HepG2 (cell line): ENCODE measurements at regions of chr20 and their contacts with region 1.

Region 1: DNA sequence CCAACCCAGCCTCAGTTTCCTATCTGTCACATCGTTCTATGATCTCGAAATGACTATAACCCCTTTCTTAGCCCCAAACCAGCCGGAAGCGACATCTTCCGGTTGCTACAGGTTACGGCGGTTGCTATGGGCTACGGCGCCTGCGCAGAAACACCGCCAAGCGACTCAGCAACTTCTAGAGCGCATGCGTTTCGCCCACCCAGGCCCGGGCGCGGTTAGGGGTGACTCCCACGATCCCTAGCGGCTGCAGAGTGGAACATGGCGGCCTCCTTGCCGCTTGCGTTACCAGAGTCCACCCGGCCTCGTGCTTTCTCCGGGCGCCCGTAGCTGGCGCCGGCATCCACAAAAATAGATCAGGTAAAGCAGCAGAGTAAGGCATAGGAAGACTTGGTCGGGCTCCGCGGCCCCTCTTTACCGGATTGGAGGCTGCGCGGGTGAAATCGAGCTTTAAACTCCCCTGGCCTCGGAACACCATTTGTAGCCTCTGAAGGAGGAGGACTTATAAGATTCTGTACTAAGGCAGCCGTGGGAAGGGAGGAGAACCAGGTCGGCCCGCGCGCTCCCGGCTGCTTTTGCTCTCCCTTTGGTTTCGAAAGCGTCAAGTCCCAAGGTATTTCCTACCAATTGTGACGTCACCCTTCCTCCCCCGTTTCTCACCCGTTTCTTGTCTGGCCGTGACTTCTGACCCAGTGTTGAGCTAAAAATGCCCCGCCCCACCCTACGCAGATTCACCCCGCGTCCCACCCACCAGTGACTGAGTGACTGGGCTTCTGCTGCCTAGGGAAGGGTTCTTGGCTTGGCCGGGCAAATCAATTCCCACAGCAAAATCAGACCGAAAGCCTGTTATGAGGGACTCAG is 3.5 kb downstream of the SDCBP2 start:
- DNase-seq: peak; percentile 97
- ATAC-seq: peak; percentile 79
- H3K4me3 ChIP-seq: peak overlapping the region; percentile 80 to 98 (median 96)
- H3K27ac ChIP-seq: peak overlapping the region; percentile 98
- H3K4me1 ChIP-seq: peaks cover 69% of the 10 kb centered on the region
- H3K27me3 ChIP-seq: no peaks in the 10 kb centered on the region; a peak in 2 of 5 replicates
- CTCF ChIP-seq: peak; percentile 43; the same call in 1 of the 2 replicates
- EP300 ChIP-seq: peak in 1 of 2 experiments; percentile 20; a peak in 3 of 4 replicates
- POLR2A ChIP-seq: peak; percentile 95 to 98
- RAD21 ChIP-seq: peak; percentile 66

Region 2: GRCh38 chr20:1336699-1337367 is 11.4 kb after region 1 on chr20:
- CTCF ChIA-PET with region 1: no interaction called
- POLR2A ChIA-PET with region 1: interaction called, 35 read pairs
- in situ Hi-C with region 1: no loop called
- intact Hi-C with region 1: no loop called
- DNase-seq: no peak
- ATAC-seq: no peak
- H3K4me3 ChIP-seq: no peak overlapping the region
- H3K27ac ChIP-seq: no peak overlapping the region
- H3K4me1 ChIP-seq: peaks cover 17% of the 10 kb centered on the region
- H3K27me3 ChIP-seq: no peaks in the 10 kb centered on the region
- CTCF ChIP-seq: no peak
- EP300 ChIP-seq: no peak
- POLR2A ChIP-seq: 0 out of 4 replicates have a peak, but pooled peaks of 1 of the 2 experiments have one; percentile 35
- RAD21 ChIP-seq: no peak

Region 3: GRCh38 chr20:1381753-1382591 is 56.6 kb after region 1 on chr20:
- CTCF ChIA-PET with region 1: no interaction called
- POLR2A ChIA-PET with region 1: interaction called, 20 read pairs
- in situ Hi-C with region 1: no loop called
- intact Hi-C with region 1: no loop called
- DNase-seq: no peak
- ATAC-seq: no peak
- H3K4me3 ChIP-seq: no peak overlapping the region
- H3K27ac ChIP-seq: no peak overlapping the region
- H3K4me1 ChIP-seq: peaks cover 81% of the 10 kb centered on the region
- H3K27me3 ChIP-seq: no peaks in the 10 kb centered on the region
- CTCF ChIP-seq: no peak
- EP300 ChIP-seq: no peak
- POLR2A ChIP-seq: no peak
- RAD21 ChIP-seq: no peak

Region 4: DNA sequence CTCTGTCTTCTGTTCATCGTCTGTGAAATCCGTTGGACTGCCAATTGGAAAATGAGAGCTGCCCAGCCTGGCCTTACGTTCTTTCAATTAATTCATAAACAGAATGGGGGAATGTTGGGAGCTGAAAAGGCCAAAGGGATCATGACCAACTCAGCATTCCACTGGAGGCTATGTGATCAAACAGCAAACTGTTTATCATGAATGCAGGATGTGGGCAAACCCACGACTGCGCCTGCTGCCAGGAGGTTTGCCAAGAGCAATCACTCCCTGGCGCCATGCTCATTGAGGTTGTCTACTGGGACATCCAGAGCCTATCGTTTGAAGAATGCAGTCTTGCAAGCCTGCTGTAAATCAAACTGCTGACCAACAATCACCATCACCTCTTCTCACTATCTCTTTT is 76.7 kb after region 1 on chr20:
- CTCF ChIA-PET with region 1: no interaction called
- POLR2A ChIA-PET with region 1: interaction called, 21 read pairs
- in situ Hi-C with region 1: no loop called
- intact Hi-C with region 1: no loop called
- DNase-seq: no peak
- ATAC-seq: no peak
- H3K4me3 ChIP-seq: no peak overlapping the region
- H3K27ac ChIP-seq: no peak overlapping the region
- H3K4me1 ChIP-seq: peaks cover 46% of the 10 kb centered on the region
- H3K27me3 ChIP-seq: 0 out of 5 replicates have a peak, but pooled peaks cover 0 to 11% of the 10 kb centered on the region in 2 experiments
- CTCF ChIP-seq: no peak
- EP300 ChIP-seq: no peak
- POLR2A ChIP-seq: no peak
- RAD21 ChIP-seq: no peak